Sciatic nerve (tissue), 2 donors: ENCODE measurements at regions of chr12 and their contacts with region 1.

Region 1: GRCh38 chr12:76621582-76622024 is 62.0 kb upstream of the OSBPL8 start:
- DNase-seq: peak; percentile 83
- ATAC-seq: peak; percentile 87

Region 2: DNA sequence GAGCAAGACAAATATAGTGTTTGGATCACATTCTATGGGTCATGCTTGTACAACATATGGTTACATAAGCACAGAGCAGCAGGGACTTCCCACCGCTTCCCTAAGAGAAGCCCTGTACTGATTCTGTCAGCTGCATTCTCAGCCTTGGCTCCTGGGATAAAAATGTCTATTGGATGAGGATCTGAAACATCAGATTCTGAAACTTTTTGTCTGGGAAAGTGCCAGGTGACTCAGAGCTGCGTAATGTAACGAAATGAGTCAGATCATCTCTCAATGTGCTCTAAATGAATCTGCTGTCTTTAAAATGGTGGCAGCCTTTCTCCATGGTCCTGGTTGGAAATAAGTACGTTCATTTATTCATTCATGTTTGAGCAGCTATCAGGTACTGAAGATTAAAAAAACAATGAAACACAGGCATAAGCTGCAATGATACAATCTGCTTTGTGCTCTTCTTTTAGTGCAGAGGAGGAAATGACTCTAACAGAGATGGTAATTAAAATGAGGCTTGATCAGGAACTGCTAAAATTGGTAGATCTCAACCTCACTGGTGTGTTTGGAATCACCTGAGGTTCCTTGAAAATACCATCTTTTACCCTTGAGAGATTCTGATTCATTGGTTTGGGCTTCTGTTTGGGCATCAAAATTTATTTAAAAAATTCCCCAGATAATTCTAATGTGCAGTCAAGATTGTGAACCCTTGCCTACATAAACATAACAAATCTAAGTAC is 438.0 kb before region 1 on chr12:
- intact Hi-C with region 1: no loop called
- DNase-seq: no peak
- ATAC-seq: peak; percentile 22

Region 3: DNA sequence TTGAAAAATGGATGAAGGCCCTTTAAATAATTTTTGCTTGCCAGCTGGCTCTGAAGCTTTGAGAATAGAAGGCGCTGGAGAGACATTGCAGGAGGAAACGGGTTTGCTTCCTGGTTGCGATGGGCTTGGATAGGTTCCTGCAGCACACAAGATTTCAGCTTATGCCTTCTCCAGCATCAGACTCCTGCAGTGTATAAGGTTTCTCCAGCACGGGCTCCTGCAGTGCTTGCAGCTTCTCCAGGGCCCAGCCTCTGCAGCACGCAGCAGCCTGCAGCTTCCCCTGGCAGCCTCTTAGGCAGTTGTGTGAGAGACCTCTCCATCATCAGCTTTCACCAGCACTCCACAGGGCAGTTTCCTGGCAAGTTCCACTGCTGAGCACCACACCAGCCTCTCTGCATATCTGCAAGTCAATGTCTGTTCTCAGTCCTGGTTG is 63.7 kb after region 1 on chr12:
- intact Hi-C with region 1: no loop called
- DNase-seq: no peak
- ATAC-seq: peak; percentile 76

Region 4: GRCh38 chr12:76790564-76791552 is 169.3 kb after region 1 on chr12:
- intact Hi-C with region 1: loop called (anchors 10 kb)
- DNase-seq: no peak
- ATAC-seq: no peak